HEK293 (cell line): ENCODE measurements at regions of chr3 and their contacts with region 1.

Region 1: GRCh38 chr3:9749645-9750555 is at the start of gene OGG1:
- H3K4me3 ChIP-seq: peak within 1 kb of the TSS; percentile 70
- H3K27ac ChIP-seq: peak within 1 kb of the TSS; percentile 66
- H3K4me1 ChIP-seq: 0 out of 2 replicates have a peak, but pooled peaks cover 2% of the 10 kb centered on the region
- CTCF ChIP-seq: peak; percentile 82

Region 2: DNA sequence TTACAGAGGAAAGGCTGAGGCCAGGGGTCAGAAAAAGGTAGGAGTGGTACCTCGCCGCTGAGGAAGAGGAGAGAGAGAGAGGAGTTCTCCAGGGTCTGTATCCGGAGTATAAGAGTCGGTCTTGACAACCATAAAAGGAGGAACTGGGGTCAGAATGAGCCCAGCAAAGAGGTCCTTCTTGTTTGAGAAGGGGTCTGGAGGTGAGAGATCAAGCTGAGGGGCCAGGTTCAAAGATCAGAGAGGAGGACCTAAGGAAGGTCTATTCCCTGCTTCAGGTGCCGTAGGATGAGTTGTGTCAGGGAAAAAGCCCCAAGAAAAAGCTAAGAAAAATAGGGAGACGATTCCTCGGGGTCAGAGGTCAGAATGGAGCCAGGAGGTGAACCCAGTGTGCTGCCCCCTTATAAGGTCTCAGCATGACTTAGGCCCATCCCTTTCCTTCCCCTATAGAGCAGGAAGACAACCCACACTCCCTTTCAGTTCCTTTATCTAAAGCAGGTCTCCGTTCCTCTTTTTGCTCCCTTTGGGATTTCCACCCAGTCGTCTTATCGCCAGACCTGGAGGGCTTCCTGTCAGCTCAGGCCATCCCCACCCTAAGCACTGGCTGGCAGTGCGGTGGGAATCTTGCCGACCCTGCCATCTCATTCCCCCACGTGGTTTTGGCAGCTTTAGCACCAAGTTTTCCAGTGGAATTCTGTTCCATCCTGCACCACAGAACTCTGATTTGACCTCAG is 99.9 kb before region 1 on chr3:
- CTCF ChIA-PET with region 1: no interaction called
- POLR2A ChIA-PET with region 1: interaction called, 10 read pairs
- H3K4me3 ChIP-seq: peak overlapping the region; percentile 92
- H3K27ac ChIP-seq: peak overlapping the region; percentile 57; the same call in 1 of the 2 replicates
- H3K4me1 ChIP-seq: no peaks in the 10 kb centered on the region
- CTCF ChIP-seq: no peak

Region 3: GRCh38 chr3:9731206-9732079 is 18.5 kb before region 1 on chr3 and contains the start of gene BRPF1:
- CTCF ChIA-PET with region 1: interaction called, 3 read pairs
- POLR2A ChIA-PET with region 1: interaction called, 47 read pairs
- H3K4me3 ChIP-seq: peak within 1 kb of the TSS; percentile 87
- H3K27ac ChIP-seq: peak within 1 kb of the TSS; percentile 100
- H3K4me1 ChIP-seq: peaks cover 7% of the 10 kb centered on the region; the same call in 1 of the 2 replicates
- CTCF ChIP-seq: peak; percentile 42; the same call in 1 of the 2 replicates

Region 4: GRCh38 chr3:9736831-9737230 is 13.1 kb before region 1 on chr3:
- CTCF ChIA-PET with region 1: no interaction called
- POLR2A ChIA-PET with region 1: interaction called, 47 read pairs
- H3K4me3 ChIP-seq: no peak overlapping the region
- H3K27ac ChIP-seq: no peak overlapping the region
- H3K4me1 ChIP-seq: peaks cover 7% of the 10 kb centered on the region; the same call in 1 of the 2 replicates
- CTCF ChIP-seq: no peak

Region 5: DNA sequence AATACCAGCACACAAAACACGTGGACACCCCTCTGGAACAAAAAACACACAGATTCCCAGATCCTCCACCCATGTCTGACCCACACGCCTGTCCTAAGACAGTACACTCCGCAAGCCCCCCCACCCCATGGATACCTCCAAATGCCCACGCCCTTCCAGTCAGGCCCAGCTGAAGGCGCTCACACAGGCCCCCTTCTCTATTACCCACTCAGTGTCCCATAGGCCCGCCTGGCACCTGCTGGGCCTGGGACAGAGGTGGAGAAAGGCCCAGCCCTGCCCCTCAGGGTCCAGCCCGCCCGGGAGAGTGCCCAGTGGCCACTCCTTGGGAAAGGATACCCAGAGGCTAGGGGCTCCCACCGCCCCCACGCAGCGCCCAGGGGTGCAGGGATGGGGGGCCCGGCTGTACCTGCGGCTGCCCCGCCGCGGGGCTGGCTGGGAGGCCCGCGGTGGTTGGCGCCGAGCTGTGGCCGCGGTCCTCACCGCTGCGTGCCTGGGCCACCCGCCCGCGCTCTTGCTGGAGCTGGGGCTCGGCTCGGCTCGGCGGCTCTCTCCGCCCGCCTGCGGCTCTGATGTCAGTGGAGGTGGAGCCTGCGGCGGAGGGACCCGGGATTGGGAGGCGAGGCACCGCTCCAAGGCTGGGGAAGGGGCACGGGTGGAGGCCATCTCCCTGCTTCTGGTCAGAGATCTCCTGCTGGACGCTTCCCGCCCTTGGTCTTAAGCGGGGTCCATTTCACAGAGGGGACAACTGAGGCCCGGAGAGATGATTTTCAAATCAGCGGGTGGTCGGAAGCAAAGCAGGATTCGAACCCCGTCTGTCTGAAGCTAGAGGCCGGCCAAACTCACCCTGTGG is 19.8 kb after region 1 on chr3 and contains the start of gene CAMK1:
- CTCF ChIA-PET with region 1: interaction called, 5 read pairs
- POLR2A ChIA-PET with region 1: interaction called, 18 read pairs
- H3K4me3 ChIP-seq: peak within 1 kb of the TSS; percentile 67
- H3K27ac ChIP-seq: peak within 1 kb of the TSS; percentile 76; the same call in 1 of the 2 replicates
- H3K4me1 ChIP-seq: peaks cover 9% of the 10 kb centered on the region
- CTCF ChIP-seq: no peak

Region 6: GRCh38 chr3:9792405-9793160 is 42.7 kb after region 1 on chr3 and contains the starts of genes ARPC4 and TADA3:
- CTCF ChIA-PET with region 1: no interaction called
- POLR2A ChIA-PET with region 1: interaction called, 16 read pairs
- H3K4me3 ChIP-seq: peak within 1 kb of the TSS; percentile 83
- H3K27ac ChIP-seq: peak within 1 kb of the TSS; percentile 97
- H3K4me1 ChIP-seq: no peaks in the 10 kb centered on the region
- CTCF ChIP-seq: peak; percentile 28